Panc1 (cell line): ENCODE measurements at regions of chr9 and their contacts with region 1.

Region 1: DNA sequence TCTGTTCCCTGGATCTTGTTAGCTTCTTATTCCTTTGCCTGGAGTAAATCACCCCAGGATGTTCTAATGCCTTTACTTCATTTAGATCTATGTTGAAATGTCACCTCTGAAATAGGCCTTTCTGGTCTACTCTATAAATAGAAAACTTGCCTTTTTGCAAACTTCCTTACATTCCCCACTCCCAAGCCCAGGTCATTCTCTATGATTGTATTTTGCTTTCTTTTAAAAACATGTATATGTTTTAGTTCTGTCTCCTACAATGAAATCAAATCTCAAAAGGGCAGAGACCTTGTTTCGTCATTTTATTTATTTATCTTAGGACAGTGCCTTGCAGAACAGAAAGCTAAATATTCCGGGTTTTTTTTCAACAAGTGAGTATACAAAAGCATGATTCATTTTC is 1657.7 kb upstream of the C9orf72 start:
- DNase-seq: no peak
- ATAC-seq: no peak
- H3K4me3 ChIP-seq: no peak overlapping the region
- H3K27ac ChIP-seq: no peak overlapping the region
- H3K4me1 ChIP-seq: no peaks in the 10 kb centered on the region
- H3K27me3 ChIP-seq: no peaks in the 10 kb centered on the region
- CTCF ChIP-seq: no peak

Region 2: GRCh38 chr9:29282121-29282520 is 51.2 kb after region 1 on chr9:
- CTCF ChIA-PET with region 1: no interaction called
- POLR2A ChIA-PET with region 1: no interaction called
- in situ Hi-C with region 1: no loop called
- intact Hi-C with region 1: loop called (anchors 5 kb)
- DNase-seq: no peak
- ATAC-seq: no peak
- H3K4me3 ChIP-seq: no peak overlapping the region
- H3K27ac ChIP-seq: no peak overlapping the region
- H3K4me1 ChIP-seq: no peaks in the 10 kb centered on the region
- H3K27me3 ChIP-seq: no peaks in the 10 kb centered on the region
- CTCF ChIP-seq: no peak

Region 3: GRCh38 chr9:29575219-29575618 is 344.3 kb after region 1 on chr9:
- CTCF ChIA-PET with region 1: no interaction called
- POLR2A ChIA-PET with region 1: no interaction called
- in situ Hi-C with region 1: no loop called
- intact Hi-C with region 1: no loop called
- DNase-seq: no peak
- ATAC-seq: no peak
- H3K4me3 ChIP-seq: no peak overlapping the region
- H3K27ac ChIP-seq: no peak overlapping the region
- H3K4me1 ChIP-seq: no peaks in the 10 kb centered on the region
- H3K27me3 ChIP-seq: no peaks in the 10 kb centered on the region
- CTCF ChIP-seq: no peak